Cardiac septum (tissue), 1 donor: ENCODE measurements at regions of chr3 and their contacts with region 1.

Region 1: GRCh38 chr3:69691860-69692259 is 47.4 kb upstream of the MITF start:
- DNase-seq: no peak

Region 2: DNA sequence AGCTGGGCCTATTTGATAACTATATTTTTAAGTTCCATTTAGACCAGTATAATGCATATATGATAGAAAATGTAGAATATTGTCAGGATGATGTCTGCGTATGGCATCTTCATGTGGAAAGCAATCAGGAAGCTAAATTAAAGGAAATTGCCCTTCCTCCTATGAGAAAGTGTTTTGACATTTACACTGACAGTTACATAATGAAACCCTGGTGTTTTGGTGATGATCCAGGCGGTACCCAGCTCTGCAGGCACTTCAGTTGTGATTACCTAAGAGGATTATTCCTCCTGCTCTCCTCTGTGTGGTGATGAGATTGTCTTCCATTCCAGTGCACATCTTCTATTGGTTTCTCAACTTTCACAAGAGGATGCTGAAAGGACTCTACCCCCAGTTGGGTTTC is 79.1 kb before region 1 on chr3:
- intact Hi-C with region 1: no loop called
- DNase-seq: no peak

Region 3: DNA sequence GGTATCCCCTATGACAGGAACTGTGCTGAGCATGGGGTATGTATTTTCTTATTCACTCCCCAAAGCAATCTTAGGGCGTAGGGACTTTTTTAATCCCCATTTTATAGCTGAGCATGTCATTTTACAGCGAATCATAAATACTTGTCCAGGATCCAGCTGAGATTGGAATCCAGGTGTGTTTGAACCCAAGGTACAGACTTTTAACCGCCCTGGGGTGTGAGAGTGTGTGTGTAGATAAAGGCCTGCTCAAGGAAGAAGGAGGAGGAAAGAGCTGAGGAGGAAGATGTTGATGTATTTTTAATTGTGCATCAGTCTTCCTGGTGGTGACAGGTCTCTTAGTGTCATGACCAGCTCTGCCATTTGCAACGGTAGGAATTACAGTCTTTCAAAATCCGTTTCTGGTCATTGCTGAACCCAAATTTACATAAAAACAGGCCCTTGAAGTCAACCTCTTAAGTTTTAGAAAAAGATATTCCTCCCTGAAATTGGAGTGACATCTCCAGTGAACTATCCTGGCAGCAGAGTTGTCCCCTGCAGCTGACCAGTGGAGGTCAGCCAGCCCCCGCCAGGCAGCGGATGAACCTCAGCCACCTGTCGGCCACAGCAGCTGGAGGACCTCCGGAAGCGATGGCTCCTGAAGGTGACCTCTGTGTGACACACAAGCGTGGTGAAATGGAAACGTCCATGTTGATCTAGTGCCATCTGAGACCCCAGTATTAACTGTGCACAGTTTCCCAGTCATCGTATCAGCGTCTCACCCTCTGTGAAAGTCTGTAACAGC is 45.4 kb before region 1 on chr3:
- intact Hi-C with region 1: no loop called
- DNase-seq: no peak

Region 4: DNA sequence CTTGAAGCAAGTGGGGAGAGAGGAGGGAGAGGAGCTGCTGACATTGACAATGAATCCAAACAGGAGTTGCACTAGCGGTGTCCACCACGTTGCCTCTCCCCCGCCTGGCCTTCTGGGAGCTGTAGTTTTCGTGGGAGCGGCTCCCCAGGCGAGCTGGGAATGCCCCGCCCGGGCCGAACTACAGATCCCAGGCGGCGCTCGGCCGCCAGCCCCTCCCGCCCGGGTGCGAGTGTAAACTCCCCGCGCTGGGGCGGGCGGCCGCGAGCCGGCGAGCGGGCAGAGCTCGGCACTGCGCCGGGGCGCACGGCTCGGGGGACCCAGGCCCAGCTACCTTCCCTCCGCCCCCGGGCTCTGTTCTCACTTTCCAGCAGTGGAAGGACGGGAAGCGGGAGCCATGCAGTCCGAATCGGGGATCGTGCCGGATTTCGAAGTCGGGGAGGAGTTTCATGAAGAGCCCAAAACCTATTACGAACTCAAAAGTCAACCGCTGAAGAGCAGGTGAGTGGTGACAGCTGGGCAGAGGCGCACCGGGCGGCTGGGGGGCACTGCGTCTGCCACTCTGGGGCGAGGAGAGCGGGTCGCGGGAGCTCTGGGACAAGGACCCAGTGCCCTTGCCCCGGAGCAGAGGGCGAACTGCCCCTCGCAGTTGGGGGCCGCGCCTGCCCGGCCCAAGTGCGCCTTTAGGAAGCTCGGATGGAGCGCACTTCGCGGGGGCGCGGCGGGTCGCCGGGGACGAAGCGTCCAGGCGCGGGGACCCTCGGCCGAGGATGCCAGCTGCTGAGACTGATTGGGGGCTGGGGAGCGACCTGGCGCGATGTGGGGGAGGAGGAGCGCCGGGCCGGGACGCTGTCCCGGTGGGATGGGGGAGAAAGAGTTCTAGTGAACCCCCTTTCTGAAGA is 47.6 kb after region 1 on chr3 and contains the start of gene MITF:
- intact Hi-C with region 1: loop called (anchors 5 kb)
- DNase-seq: peak; percentile 94
- total RNA-seq, gene MITF: 97.6 TPM

Region 5: GRCh38 chr3:69751074-69751476 is 59.2 kb after region 1 on chr3:
- intact Hi-C with region 1: no loop called
- DNase-seq: no peak

Region 6: GRCh38 chr3:69770976-69771634 is 79.2 kb after region 1 on chr3:
- intact Hi-C with region 1: no loop called
- DNase-seq: no peak

Region 7: DNA sequence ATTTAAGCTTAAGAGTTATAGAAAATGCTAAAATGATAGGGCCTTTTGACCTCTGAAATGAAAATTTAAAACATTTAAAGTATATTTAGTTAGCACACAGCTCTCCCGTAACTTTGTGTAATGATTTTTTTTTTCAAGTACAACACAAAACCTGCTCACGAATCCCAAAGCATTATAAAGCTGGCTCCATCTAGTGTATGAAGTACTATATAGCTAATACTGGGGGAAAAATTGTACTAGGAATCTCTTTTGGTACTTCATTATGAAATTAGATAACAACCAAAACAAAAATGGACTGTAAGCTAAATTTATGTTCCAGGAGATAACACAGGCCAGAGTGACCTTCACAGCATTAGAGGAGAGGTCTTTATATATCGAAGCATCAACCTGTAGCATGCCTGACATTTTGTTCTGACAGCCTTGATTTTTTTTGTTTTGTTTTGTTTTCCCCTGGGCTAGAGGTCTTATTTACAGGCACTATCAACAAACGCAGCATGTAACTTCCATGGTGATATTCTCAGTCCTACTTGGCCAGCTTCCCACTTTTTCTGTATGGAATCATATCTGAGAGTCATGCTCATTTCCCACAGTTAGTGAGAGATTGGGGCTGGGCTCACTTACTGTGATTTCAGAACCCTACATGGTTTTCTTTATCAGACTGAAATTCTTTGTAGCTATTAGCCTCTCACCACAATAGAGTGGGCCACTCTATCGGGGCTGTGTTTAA is 163.7 kb after region 1 on chr3:
- intact Hi-C with region 1: loop called (anchors 2 kb)
- DNase-seq: no peak

Region 8: GRCh38 chr3:69948246-69948862 is 256.5 kb after region 1 on chr3:
- intact Hi-C with region 1: loop called (anchors 5 kb)
- DNase-seq: no peak